Right cardiac atrium (tissue), 5 donors: ENCODE measurements at regions of chr12 and their contacts with region 1.

Region 1: GRCh38 chr12:75334384-75335030 is at the start of gene GLIPR1L1:
- DNase-seq: peak; percentile 89 to 92 (median 89)
- ATAC-seq: peak; percentile 90 to 95
- H3K4me3 ChIP-seq: peak within 1 kb of the TSS; percentile 44
- H3K27ac ChIP-seq: no peak within 1 kb of the TSS
- H3K4me1 ChIP-seq: no peaks in the 10 kb centered on the region
- H3K27me3 ChIP-seq: no peaks in the 10 kb centered on the region
- total RNA-seq, gene GLIPR1L1: not detected

Region 2: GRCh38 chr12:74747305-74747704 is 587.2 kb before region 1 on chr12:
- intact Hi-C with region 1: no loop called
- DNase-seq: no peak
- ATAC-seq: no peak
- H3K4me3 ChIP-seq: no peak overlapping the region
- H3K27ac ChIP-seq: no peak overlapping the region
- H3K4me1 ChIP-seq: no peaks in the 10 kb centered on the region
- H3K27me3 ChIP-seq: no peaks in the 10 kb centered on the region

Region 3: DNA sequence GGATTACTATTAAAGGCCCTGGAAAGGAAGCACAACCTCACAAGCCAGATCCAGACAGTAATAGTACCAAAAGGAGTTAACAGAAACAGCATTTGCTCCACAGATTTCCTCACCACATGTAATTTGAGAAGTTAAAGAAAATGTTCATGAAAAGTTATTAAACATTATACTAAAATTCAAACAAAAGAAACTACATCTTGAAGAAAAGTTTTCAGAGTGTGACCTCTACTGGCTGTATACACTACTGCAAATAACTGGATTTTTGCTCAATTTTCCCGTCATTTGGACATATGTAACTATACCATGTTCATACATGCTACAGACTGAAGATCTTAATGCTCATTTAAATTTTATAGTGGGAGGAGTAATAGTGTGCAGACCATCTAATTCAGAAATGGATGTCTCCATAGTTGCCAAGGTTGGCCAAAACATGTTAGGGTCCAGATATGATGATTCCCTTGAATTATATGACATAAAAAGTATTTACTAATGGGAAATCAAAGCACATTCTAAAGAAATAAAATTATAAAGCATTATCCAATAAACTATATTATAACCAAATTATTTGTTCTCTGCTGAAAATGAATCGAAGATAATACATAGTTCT is 171.3 kb after region 1 on chr12:
- intact Hi-C with region 1: loop called in 2 of 4 experiments (anchors 10 kb)
- DNase-seq: no peak
- ATAC-seq: no peak
- H3K4me3 ChIP-seq: no peak overlapping the region
- H3K27ac ChIP-seq: no peak overlapping the region
- H3K4me1 ChIP-seq: no peaks in the 10 kb centered on the region
- H3K27me3 ChIP-seq: no peaks in the 10 kb centered on the region